Esophagus muscularis mucosa (tissue), 4 donors: ENCODE measurements at regions of chr10 and their contacts with region 1.

Region 1: GRCh38 chr10:45594276-45595106 is 78.1 kb downstream of the ZFAND4 start:
- DNase-seq: peak; percentile 98
- H3K4me3 ChIP-seq: peak overlapping the region; percentile 81 to 96 (median 92)
- H3K27ac ChIP-seq: peak overlapping the region; percentile 77 to 84 (median 80)
- H3K4me1 ChIP-seq: peaks cover 17 to 29% (median 25%) of the 10 kb centered on the region in 4 donors
- H3K27me3 ChIP-seq: peaks cover 0 to 3% (median 0%) of the 10 kb centered on the region in 4 donors
- CTCF ChIP-seq: peak in 1 of 3 experiments; percentile 29
- EP300 ChIP-seq: no peak
- POLR2A ChIP-seq: peak; percentile 13

Region 2: DNA sequence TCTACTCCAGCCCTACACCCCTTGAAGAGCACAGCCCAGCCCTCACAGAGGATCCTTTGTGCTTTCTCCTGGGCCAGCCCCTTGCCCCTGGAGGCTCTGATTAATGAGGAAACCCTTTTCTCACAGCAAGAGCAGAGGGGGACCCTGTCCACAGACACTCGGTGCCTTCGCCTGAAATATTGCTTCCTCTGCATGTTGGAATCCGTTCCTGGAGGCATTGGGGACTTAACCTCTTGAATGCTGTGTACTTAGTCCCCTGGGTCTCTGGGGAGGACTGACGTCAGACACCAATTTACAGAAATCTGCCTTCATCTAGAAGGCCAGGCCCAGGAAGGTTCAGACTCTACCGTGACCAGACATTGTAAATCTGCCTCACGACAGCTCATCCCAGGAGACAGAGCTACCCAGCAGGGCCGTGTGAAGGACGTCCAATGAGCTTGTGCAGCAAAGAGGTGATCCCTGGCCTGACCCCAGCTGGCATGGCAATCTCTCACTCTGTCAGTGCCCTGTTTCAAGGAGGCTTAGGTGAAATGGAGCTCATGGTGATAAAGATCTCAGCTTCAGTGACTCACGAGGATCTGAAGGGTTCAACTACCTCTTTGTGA is 691.4 kb before region 1 on chr10:
- intact Hi-C with region 1: no loop called
- DNase-seq: no peak
- H3K4me3 ChIP-seq: no peak overlapping the region
- H3K27ac ChIP-seq: no peak overlapping the region
- H3K4me1 ChIP-seq: no peaks in the 10 kb centered on the region
- H3K27me3 ChIP-seq: no peaks in the 10 kb centered on the region
- CTCF ChIP-seq: no peak
- EP300 ChIP-seq: no peak
- POLR2A ChIP-seq: no peak

Region 3: DNA sequence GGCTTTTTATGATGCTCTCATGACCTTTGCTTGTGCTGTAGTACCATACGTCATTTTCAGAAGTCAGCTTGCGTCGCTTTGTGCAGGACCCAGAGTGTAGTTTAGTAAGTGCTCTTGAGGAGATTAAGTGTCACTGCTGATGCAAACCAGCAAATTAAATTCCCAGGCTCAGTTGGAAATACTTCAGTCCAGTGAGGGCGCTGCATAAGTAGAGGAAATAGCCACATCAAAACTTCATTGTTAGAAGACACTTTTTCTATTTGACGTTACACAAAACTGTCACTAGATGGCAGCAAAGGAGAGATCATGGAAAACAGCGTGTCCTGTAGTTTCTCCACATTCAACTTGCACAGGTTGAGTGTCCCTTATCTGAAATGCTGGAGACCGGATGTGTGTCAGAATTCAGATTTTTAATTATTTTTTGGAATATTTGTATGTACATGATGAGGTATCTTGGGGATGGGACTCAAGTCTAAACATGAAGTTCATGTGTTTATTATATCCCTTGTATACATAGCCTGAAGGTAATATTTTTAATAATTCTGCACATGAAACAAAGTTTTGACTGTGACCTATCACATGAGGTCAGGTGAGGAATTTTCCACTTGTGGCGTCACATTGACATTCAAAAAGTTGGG is 585.8 kb before region 1 on chr10:
- intact Hi-C with region 1: loop called (anchors 10 kb)
- DNase-seq: peak; percentile 89
- H3K4me3 ChIP-seq: no peak overlapping the region
- H3K27ac ChIP-seq: no peak overlapping the region
- H3K4me1 ChIP-seq: peaks cover 3 to 25% (median 9%) of the 10 kb centered on the region in 4 donors
- H3K27me3 ChIP-seq: no peaks in the 10 kb centered on the region
- CTCF ChIP-seq: peak; percentile 74 to 81 (median 75)
- EP300 ChIP-seq: no peak
- POLR2A ChIP-seq: no peak

Region 4: DNA sequence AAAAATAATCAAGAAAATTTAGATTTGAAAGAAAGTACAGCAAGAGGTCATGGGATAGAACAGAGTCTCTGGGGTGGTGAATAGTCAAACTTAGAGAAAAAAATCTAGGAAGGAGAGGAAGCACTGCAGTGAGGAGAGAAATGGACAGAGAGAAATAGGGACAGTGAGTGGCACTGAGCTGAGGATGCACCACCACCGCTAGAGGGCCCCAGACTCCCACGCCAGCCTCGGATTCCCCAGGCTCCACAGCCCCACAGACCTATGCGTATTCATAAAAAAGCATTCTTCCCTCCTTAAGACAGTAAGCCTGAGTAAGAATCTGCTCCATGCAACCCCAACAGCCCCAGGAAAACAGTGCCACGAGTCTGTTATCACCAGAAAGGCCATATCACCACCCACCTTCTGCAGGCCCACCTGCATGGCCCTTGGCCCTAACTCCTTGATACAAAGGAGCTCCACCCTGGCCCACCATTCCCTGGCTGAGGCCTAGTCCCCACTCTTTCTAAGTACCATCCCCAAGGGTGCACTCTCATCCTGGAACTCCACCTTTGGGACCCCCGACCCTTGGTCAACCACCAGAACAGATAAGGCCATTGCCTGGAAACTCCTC is 129.4 kb before region 1 on chr10:
- intact Hi-C with region 1: loop called (anchors 10 kb)
- DNase-seq: no peak
- H3K4me3 ChIP-seq: no peak overlapping the region
- H3K27ac ChIP-seq: no peak overlapping the region
- H3K4me1 ChIP-seq: peaks cover 2 to 14% (median 7%) of the 10 kb centered on the region in 4 donors
- H3K27me3 ChIP-seq: no peaks in the 10 kb centered on the region
- CTCF ChIP-seq: peak; percentile 66 to 89 (median 76)
- EP300 ChIP-seq: no peak
- POLR2A ChIP-seq: no peak

Region 5: DNA sequence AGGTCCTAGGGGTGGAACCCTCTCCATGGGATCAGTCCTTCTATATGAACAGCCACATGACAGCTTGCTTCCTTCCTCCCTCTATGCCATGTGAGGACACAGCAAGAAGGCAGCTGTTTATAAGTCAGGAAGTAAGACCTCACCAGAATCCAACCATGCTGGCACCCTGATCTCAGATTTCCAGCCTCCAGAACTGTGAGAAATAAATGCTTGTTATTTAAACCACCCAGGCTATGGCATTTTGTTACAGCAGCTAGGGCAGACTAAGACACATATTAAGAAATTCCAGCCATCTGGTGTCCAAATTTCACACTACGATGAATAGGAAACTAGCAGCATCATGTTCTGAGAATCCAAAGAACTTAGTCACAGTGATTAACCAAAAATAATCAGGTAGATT is 62.0 kb before region 1 on chr10:
- intact Hi-C with region 1: no loop called
- DNase-seq: no peak
- H3K4me3 ChIP-seq: no peak overlapping the region
- H3K27ac ChIP-seq: no peak overlapping the region
- H3K4me1 ChIP-seq: no peaks in the 10 kb centered on the region
- H3K27me3 ChIP-seq: no peaks in the 10 kb centered on the region
- CTCF ChIP-seq: no peak
- EP300 ChIP-seq: no peak
- POLR2A ChIP-seq: no peak